IMR-90 (cell line): ENCODE measurements at regions of chr18 and their contacts with region 1.

Region 1: DNA sequence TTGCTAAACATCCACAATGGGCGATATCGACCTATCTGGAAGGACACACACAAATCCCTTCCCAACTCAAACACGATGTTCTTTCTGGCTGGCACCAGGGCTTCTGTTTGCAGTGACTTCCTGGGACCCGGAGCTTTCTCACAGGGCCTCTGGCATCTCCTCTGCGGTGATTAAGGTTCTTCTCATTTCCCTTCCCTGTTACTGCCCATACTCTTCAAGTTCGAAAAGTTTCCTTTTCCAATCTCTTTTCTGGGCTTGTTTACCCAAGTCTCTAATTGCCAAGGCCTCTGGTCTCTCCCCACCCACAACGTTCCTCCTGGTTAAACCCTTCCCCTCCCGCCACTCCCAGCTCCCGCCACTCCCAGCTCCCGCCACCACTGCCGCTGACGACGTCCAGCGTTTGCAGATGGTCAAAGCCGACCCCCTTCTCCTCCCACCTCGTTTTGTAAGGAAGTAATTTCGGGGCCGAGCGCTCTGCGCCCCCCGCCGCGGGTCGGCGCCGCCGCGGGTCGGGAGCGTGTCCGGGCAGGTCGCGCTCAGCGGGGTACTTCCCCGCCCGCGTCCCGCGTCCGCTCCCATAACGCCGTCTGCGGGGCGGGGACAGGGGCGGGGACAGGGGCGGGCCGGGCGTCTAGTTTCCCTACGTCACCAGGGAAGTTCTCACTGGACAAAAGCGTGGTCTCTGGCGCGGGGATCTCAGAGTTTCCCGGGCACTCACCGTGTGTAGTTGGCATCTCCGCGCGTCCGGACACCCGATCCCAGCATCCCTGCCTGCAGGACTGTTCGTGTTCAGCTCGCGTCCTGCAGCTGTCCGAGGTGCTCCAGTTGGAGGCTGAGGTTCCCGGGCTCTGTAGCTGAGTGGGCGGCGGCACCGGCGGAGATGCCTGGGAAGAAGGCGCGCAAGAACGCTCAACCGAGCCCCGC is at the start of gene PMAIP1:
- DNase-seq: peak; percentile 94
- ATAC-seq: peak; percentile 91
- H3K4me3 ChIP-seq: peak within 1 kb of the TSS; percentile 76
- H3K27ac ChIP-seq: peak within 1 kb of the TSS; percentile 97
- H3K4me1 ChIP-seq: peaks cover 11% of the 10 kb centered on the region
- H3K27me3 ChIP-seq: no peaks in the 10 kb centered on the region
- CTCF ChIP-seq: no peak
- POLR2A ChIP-seq: peak; percentile 100
- RAD21 ChIP-seq: peak; percentile 39; the same call in 1 of the 2 replicates
- total RNA-seq, gene PMAIP1: 14.0 and 26.9 TPM in 2 replicates

Region 2: DNA sequence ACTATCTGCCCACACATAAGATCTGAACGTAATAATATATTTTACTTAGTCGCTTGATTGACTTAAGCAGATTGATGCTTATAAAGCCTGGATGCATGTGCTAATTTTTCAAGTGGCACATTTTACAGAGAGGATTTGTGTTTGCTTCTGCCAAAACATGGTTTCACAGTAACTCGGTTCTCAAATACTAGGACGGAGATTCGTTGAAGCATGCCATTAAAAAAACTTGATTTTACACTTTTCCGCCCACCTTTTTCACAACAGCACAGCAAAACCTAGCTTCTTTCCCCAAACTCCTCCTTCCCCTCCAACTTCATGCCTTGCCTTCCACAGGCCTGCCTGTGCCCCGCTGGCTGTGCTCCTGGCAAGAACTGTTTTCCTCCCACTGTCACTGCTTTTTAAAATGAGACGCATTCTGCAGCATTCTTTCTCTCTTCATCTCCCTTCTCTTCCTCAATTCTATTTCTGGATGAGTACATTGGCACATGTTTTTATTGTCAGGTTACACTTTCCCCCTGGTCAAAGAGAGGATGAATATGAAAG is 485.4 kb before region 1 on chr18:
- CTCF ChIA-PET with region 1: no interaction called
- POLR2A ChIA-PET with region 1: interaction called, 13 read pairs
- dilution Hi-C with region 1: no loop called
- in situ Hi-C with region 1: no loop called
- intact Hi-C with region 1: no loop called
- DNase-seq: no peak
- ATAC-seq: no peak
- H3K4me3 ChIP-seq: no peak overlapping the region
- H3K27ac ChIP-seq: no peak overlapping the region
- H3K4me1 ChIP-seq: no peaks in the 10 kb centered on the region
- H3K27me3 ChIP-seq: peaks cover 7% of the 10 kb centered on the region
- CTCF ChIP-seq: no peak
- POLR2A ChIP-seq: no peak
- RAD21 ChIP-seq: no peak

Region 3: DNA sequence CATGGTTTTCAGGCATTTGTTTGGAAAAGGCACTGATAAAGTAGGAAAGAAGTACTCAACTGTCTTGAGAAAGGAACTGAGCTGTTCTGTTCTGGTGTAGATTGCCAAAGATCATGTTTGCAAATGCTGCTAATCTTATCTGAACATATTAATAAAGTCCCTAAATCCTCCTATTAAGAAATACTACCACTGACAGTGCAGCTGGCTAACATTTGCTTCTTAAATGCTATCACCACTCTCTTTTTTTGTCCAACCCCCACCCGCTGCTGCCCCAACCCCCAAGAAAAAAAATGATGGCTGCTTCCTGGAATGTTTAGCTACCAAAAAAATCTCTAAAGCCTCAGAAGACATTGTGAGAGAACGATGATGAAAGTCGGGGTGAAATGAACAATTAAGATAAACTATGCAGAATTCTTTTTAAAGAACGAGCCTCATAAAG is 333.0 kb before region 1 on chr18:
- CTCF ChIA-PET with region 1: no interaction called
- POLR2A ChIA-PET with region 1: no interaction called
- dilution Hi-C with region 1: no loop called
- in situ Hi-C with region 1: no loop called
- intact Hi-C with region 1: no loop called
- DNase-seq: peak; percentile 82
- ATAC-seq: peak; percentile 76
- H3K4me3 ChIP-seq: no peak overlapping the region
- H3K27ac ChIP-seq: peak overlapping the region; percentile 60; the same call in 1 of the 2 replicates
- H3K4me1 ChIP-seq: peaks cover 17% of the 10 kb centered on the region; the same call in 1 of the 2 replicates
- H3K27me3 ChIP-seq: no peaks in the 10 kb centered on the region
- CTCF ChIP-seq: no peak
- POLR2A ChIP-seq: no peak
- RAD21 ChIP-seq: no peak

Region 4: GRCh38 chr18:59697236-59697932 is 202.2 kb before region 1 on chr18 and contains the start of gene CCBE1:
- CTCF ChIA-PET with region 1: no interaction called
- POLR2A ChIA-PET with region 1: no interaction called
- dilution Hi-C with region 1: no loop called
- in situ Hi-C with region 1: no loop called
- intact Hi-C with region 1: loop called (anchors 10 kb)
- DNase-seq: peak; percentile 71
- ATAC-seq: peak; percentile 82
- H3K4me3 ChIP-seq: peak within 1 kb of the TSS; percentile 71
- H3K27ac ChIP-seq: peak within 1 kb of the TSS; percentile 63
- H3K4me1 ChIP-seq: peaks cover 13% of the 10 kb centered on the region
- H3K27me3 ChIP-seq: no peaks in the 10 kb centered on the region
- CTCF ChIP-seq: peak; percentile 82
- POLR2A ChIP-seq: 0 out of 2 replicates have a peak, but pooled peaks have one; percentile 11
- RAD21 ChIP-seq: peak; percentile 75
- total RNA-seq, gene CCBE1: 93.9 and 148 TPM in 2 replicates

Region 5: GRCh38 chr18:59837586-59837985 is 62.0 kb before region 1 on chr18:
- CTCF ChIA-PET with region 1: interaction called, 8 read pairs
- POLR2A ChIA-PET with region 1: interaction called, 3 read pairs
- dilution Hi-C with region 1: no loop called
- in situ Hi-C with region 1: no loop called
- intact Hi-C with region 1: loop called (anchors 1 kb)
- DNase-seq: peak; percentile 67
- ATAC-seq: peak; percentile 83
- H3K4me3 ChIP-seq: no peak overlapping the region
- H3K27ac ChIP-seq: no peak overlapping the region
- H3K4me1 ChIP-seq: peaks cover 2% of the 10 kb centered on the region; the same call in 1 of the 2 replicates
- H3K27me3 ChIP-seq: peaks cover 4% of the 10 kb centered on the region; the same call in 1 of the 2 replicates
- CTCF ChIP-seq: peak; percentile 89
- POLR2A ChIP-seq: no peak
- RAD21 ChIP-seq: peak; percentile 88

Region 6: GRCh38 chr18:59885579-59886163 is 13.9 kb before region 1 on chr18:
- CTCF ChIA-PET with region 1: interaction called, 6 read pairs
- POLR2A ChIA-PET with region 1: interaction called, 5 read pairs
- dilution Hi-C with region 1: no loop called
- in situ Hi-C with region 1: no loop called
- intact Hi-C with region 1: loop called (anchors 2 kb)
- DNase-seq: peak; percentile 92
- ATAC-seq: peak; percentile 75
- H3K4me3 ChIP-seq: no peak overlapping the region; the same call in 1 of the 2 replicates
- H3K27ac ChIP-seq: peak overlapping the region; percentile 95
- H3K4me1 ChIP-seq: peaks cover 17% of the 10 kb centered on the region
- H3K27me3 ChIP-seq: no peaks in the 10 kb centered on the region
- CTCF ChIP-seq: no peak
- POLR2A ChIP-seq: no peak
- RAD21 ChIP-seq: no peak